IMR-90 (cell line): ENCODE measurements at regions of chr2 and their contacts with region 1.

Region 1: GRCh38 chr2:216996279-216996845 is 136.5 kb upstream of the TNP1 start:
- DNase-seq: no peak
- ATAC-seq: no peak
- H3K4me3 ChIP-seq: no peak overlapping the region
- H3K27ac ChIP-seq: no peak overlapping the region
- H3K4me1 ChIP-seq: peaks cover 5% of the 10 kb centered on the region; the same call in 1 of the 2 replicates
- H3K27me3 ChIP-seq: peaks cover 3% of the 10 kb centered on the region; the same call in 1 of the 2 replicates
- CTCF ChIP-seq: no peak
- POLR2A ChIP-seq: no peak
- RAD21 ChIP-seq: no peak

Region 2: GRCh38 chr2:216090369-216090786 is 906.0 kb before region 1 on chr2:
- CTCF ChIA-PET with region 1: no interaction called
- POLR2A ChIA-PET with region 1: no interaction called
- dilution Hi-C with region 1: no loop called
- in situ Hi-C with region 1: no loop called
- intact Hi-C with region 1: no loop called
- DNase-seq: peak; percentile 53
- ATAC-seq: no peak
- H3K4me3 ChIP-seq: no peak overlapping the region
- H3K27ac ChIP-seq: no peak overlapping the region
- H3K4me1 ChIP-seq: no peaks in the 10 kb centered on the region
- H3K27me3 ChIP-seq: no peaks in the 10 kb centered on the region; the same call in 1 of the 2 replicates
- CTCF ChIP-seq: no peak
- POLR2A ChIP-seq: no peak
- RAD21 ChIP-seq: no peak

Region 3: DNA sequence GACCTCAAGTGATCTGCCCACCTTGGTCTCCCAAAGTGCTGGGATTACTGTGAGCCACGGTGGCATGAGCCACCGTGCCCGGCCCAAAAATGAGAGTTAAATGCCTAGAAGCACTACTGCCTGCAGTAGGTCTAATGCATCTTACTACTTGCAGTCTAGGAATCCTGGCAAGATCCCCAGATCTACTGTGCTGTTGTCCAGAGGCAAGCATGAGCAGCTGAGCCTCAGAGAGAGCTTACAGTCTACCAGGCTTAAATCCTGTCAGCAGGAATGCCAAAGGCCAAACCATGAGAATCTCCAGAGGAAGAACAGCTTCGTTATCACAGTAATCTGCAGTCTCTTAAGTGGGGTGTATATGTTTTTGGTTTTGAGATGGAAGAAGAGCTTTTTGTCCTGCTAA is 832.8 kb before region 1 on chr2:
- CTCF ChIA-PET with region 1: no interaction called
- POLR2A ChIA-PET with region 1: no interaction called
- dilution Hi-C with region 1: no loop called
- in situ Hi-C with region 1: no loop called
- intact Hi-C with region 1: no loop called
- DNase-seq: peak; percentile 69
- ATAC-seq: peak; percentile 93
- H3K4me3 ChIP-seq: no peak overlapping the region
- H3K27ac ChIP-seq: no peak overlapping the region
- H3K4me1 ChIP-seq: no peaks in the 10 kb centered on the region
- H3K27me3 ChIP-seq: no peaks in the 10 kb centered on the region
- CTCF ChIP-seq: no peak
- POLR2A ChIP-seq: no peak
- RAD21 ChIP-seq: no peak

Region 4: GRCh38 chr2:216412022-216412999 is 584.1 kb before region 1 on chr2 and contains the start of gene SMARCAL1:
- CTCF ChIA-PET with region 1: no interaction called
- POLR2A ChIA-PET with region 1: interaction called, 11 read pairs
- dilution Hi-C with region 1: no loop called
- in situ Hi-C with region 1: no loop called
- intact Hi-C with region 1: no loop called
- DNase-seq: peak; percentile 97
- ATAC-seq: peak; percentile 96
- H3K4me3 ChIP-seq: peak within 1 kb of the TSS; percentile 66
- H3K27ac ChIP-seq: peak within 1 kb of the TSS; percentile 99
- H3K4me1 ChIP-seq: peaks cover 2% of the 10 kb centered on the region; the same call in 1 of the 2 replicates
- H3K27me3 ChIP-seq: no peaks in the 10 kb centered on the region
- CTCF ChIP-seq: no peak
- POLR2A ChIP-seq: no peak; the same call in 1 of the 2 replicates
- RAD21 ChIP-seq: no peak
- total RNA-seq, gene SMARCAL1: 10.8 and 13.6 TPM in 2 replicates

Region 5: DNA sequence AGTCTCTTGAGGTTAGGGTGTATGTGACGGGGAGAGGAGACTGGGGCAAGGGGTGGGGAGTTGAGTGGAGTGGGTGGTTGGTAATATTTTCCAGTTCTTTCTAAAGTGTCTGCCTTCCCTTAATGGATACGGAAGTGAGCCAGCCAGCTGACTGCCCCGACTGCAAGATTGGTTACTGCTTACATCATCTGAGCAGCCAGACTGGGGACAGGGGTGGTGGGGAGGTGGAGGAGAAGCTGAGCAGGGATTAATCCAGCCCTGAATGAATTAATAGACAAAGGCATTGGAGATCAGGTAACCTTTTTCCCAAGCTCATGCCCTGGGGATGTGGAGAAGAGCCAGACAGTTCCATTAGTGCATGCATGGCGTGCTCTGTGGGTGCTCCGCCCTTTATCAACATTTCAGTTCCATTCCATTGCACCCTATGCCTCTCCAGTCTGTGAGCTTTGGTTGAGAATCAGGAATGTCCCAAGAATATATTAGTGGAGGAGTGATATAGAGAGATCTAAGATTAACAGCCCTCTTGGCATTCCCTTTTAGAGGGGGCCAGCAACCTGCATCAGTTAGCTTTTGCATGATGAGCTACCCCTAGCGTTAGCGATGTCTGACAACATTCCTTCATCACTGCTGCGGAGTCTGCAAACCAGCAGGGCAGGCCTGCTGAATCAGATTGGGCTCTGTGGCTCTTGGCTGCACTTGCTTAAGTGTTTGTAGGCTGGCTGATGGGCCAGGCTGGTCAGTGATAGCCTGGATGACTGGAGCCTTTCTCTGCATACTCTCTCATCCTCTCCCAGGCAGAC is 203.9 kb before region 1 on chr2:
- CTCF ChIA-PET with region 1: no interaction called
- POLR2A ChIA-PET with region 1: no interaction called
- dilution Hi-C with region 1: no loop called
- in situ Hi-C with region 1: no loop called
- intact Hi-C with region 1: no loop called
- DNase-seq: peak; percentile 48
- ATAC-seq: peak; percentile 76
- H3K4me3 ChIP-seq: no peak overlapping the region
- H3K27ac ChIP-seq: peak overlapping the region; percentile 47; the same call in 1 of the 2 replicates
- H3K4me1 ChIP-seq: peaks cover 8% of the 10 kb centered on the region; the same call in 1 of the 2 replicates
- H3K27me3 ChIP-seq: no peaks in the 10 kb centered on the region; the same call in 1 of the 2 replicates
- CTCF ChIP-seq: no peak
- POLR2A ChIP-seq: no peak
- RAD21 ChIP-seq: no peak